Left lung (tissue), 14 donors: ENCODE measurements at regions of chr10 and their contacts with region 1.

Region 1: GRCh38 chr10:60434418-60435046 is 44.9 kb upstream of the ANK3 start:
- DNase-seq: peak in 2 of 4 donors; percentile 34 to 69
- ATAC-seq: peak; percentile 90
- H3K4me3 ChIP-seq: no peak overlapping the region
- H3K27ac ChIP-seq: no peak overlapping the region
- H3K4me1 ChIP-seq: peaks cover 4% of the 10 kb centered on the region in 2 donors
- H3K27me3 ChIP-seq: no peaks in the 10 kb centered on the region
- CTCF ChIP-seq: peak; percentile 59 to 60

Region 2: GRCh38 chr10:60099998-60100747 is 334.4 kb before region 1 on chr10:
- intact Hi-C with region 1: loop called in 1 of 2 experiments (anchors 5 kb)
- DNase-seq: peak in 2 of 4 donors; percentile 51 to 69
- ATAC-seq: peak; percentile 90
- H3K4me3 ChIP-seq: no peak overlapping the region
- H3K27ac ChIP-seq: no peak overlapping the region
- H3K4me1 ChIP-seq: no peaks in the 10 kb centered on the region
- H3K27me3 ChIP-seq: no peaks in the 10 kb centered on the region
- CTCF ChIP-seq: peak; percentile 48 to 51

Region 3: DNA sequence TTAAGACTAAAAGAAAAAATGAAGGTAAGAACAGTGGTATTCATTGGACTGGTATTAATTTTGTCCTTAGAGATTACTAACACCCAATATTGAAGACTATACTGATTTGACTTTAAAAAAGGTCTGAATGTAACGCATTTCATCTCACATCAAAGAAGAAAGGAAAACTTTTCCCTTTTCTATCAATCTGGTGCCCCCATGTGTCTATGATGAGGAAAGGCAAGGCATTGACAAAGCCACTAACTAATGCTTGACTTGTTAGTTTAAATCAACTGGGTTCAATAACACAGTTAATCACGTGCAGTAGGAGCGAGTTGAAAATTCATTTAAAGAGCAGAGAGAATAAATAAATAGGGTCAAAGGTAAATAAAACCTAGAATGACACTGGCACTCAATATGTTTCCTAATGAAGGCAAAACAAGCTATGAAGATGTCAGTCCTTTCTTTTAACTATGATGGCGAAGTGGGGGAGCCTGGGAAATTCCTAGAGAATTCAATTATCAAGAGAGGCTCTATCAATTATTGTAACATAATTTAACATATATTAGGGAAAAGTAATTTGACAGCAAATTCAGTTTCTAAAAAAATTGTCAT is 225.8 kb before region 1 on chr10:
- intact Hi-C with region 1: loop called in 1 of 2 experiments (anchors 5 kb)
- DNase-seq: peak in 2 of 4 donors; percentile 16 to 35
- ATAC-seq: peak; percentile 42
- H3K4me3 ChIP-seq: no peak overlapping the region
- H3K27ac ChIP-seq: no peak overlapping the region
- H3K4me1 ChIP-seq: no peaks in the 10 kb centered on the region
- H3K27me3 ChIP-seq: no peaks in the 10 kb centered on the region
- CTCF ChIP-seq: peak; percentile 29 to 53